B cell (primary cell): ENCODE measurements at regions of chr1 and their contacts with region 1.

Region 1: GRCh38 chr1:221741711-221742554 is at the start of gene DUSP10:
- DNase-seq: peak; percentile 100
- ATAC-seq: peak; percentile 78
- H3K4me3 ChIP-seq: peak within 1 kb of the TSS; percentile 85 to 94 (median 94)
- H3K4me3 Mint-ChIP-seq: no peak within 1 kb of the TSS
- H3K27ac ChIP-seq: peak within 1 kb of the TSS; percentile 99
- H3K27ac Mint-ChIP-seq: no peak within 1 kb of the TSS
- H3K4me1 ChIP-seq: peaks cover 28 to 42% of the 10 kb centered on the region in 2 donors
- H3K4me1 Mint-ChIP-seq: peaks cover 26% of the 10 kb centered on the region
- H3K27me3 ChIP-seq: no peaks in the 10 kb centered on the region
- H3K27me3 Mint-ChIP-seq: no peaks in the 10 kb centered on the region
- CTCF ChIP-seq: no peak
- total RNA-seq, gene DUSP10: 19.8 and 22.8 TPM in 2 replicates

Region 2: GRCh38 chr1:220879076-220879508 is 862.8 kb before region 1 on chr1 and contains the start of gene HLX:
- CTCF ChIA-PET with region 1: interaction called, 3 read pairs
- POLR2A ChIA-PET with region 1: no interaction called
- intact Hi-C with region 1: loop called (anchors 5 kb)
- DNase-seq: peak; percentile 84
- ATAC-seq: peak; percentile 83
- H3K4me3 ChIP-seq: peak within 1 kb of the TSS; percentile 62 to 84 (median 75)
- H3K4me3 Mint-ChIP-seq: peak within 1 kb of the TSS; percentile 89
- H3K27ac ChIP-seq: peak within 1 kb of the TSS; percentile 25 to 53
- H3K27ac Mint-ChIP-seq: peak within 1 kb of the TSS; percentile 94
- H3K4me1 ChIP-seq: peaks cover 40 to 55% of the 10 kb centered on the region in 2 donors
- H3K4me1 Mint-ChIP-seq: peaks cover 59% of the 10 kb centered on the region
- H3K27me3 ChIP-seq: peaks cover 0 to 53% (median 23%) of the 10 kb centered on the region in 4 experiments
- H3K27me3 Mint-ChIP-seq: peaks cover 10% of the 10 kb centered on the region
- CTCF ChIP-seq: no peak
- total RNA-seq, gene HLX: 7.7 and 9.1 TPM in 2 replicates

Region 3: GRCh38 chr1:221117548-221117951 is 624.4 kb before region 1 on chr1:
- CTCF ChIA-PET with region 1: no interaction called
- POLR2A ChIA-PET with region 1: no interaction called
- intact Hi-C with region 1: no loop called
- DNase-seq: no peak
- ATAC-seq: no peak
- H3K4me3 ChIP-seq: no peak overlapping the region
- H3K4me3 Mint-ChIP-seq: no peak overlapping the region
- H3K27ac ChIP-seq: no peak overlapping the region
- H3K27ac Mint-ChIP-seq: no peak overlapping the region
- H3K4me1 ChIP-seq: no peaks in the 10 kb centered on the region
- H3K4me1 Mint-ChIP-seq: no peaks in the 10 kb centered on the region
- H3K27me3 ChIP-seq: no peaks in the 10 kb centered on the region
- H3K27me3 Mint-ChIP-seq: peaks cover 12% of the 10 kb centered on the region
- CTCF ChIP-seq: no peak

Region 4: GRCh38 chr1:221693087-221693486 is 48.8 kb before region 1 on chr1:
- CTCF ChIA-PET with region 1: no interaction called
- POLR2A ChIA-PET with region 1: no interaction called
- intact Hi-C with region 1: no loop called
- DNase-seq: no peak
- ATAC-seq: no peak
- H3K4me3 ChIP-seq: no peak overlapping the region
- H3K4me3 Mint-ChIP-seq: no peak overlapping the region
- H3K27ac ChIP-seq: no peak overlapping the region
- H3K27ac Mint-ChIP-seq: no peak overlapping the region
- H3K4me1 ChIP-seq: no peaks in the 10 kb centered on the region
- H3K4me1 Mint-ChIP-seq: peaks cover 7% of the 10 kb centered on the region
- H3K27me3 ChIP-seq: no peaks in the 10 kb centered on the region
- H3K27me3 Mint-ChIP-seq: no peaks in the 10 kb centered on the region
- CTCF ChIP-seq: peak; percentile 21

Region 5: GRCh38 chr1:221708987-221709386 is 32.9 kb before region 1 on chr1:
- CTCF ChIA-PET with region 1: interaction called, 16 read pairs
- POLR2A ChIA-PET with region 1: interaction called, 44 read pairs
- intact Hi-C with region 1: loop called (anchors 1 kb)
- DNase-seq: peak; percentile 84
- ATAC-seq: peak; percentile 63
- H3K4me3 ChIP-seq: no peak overlapping the region
- H3K4me3 Mint-ChIP-seq: peak overlapping the region; percentile 65
- H3K27ac ChIP-seq: no peak overlapping the region
- H3K27ac Mint-ChIP-seq: peak overlapping the region; percentile 83
- H3K4me1 ChIP-seq: peaks cover 34 to 37% of the 10 kb centered on the region in 2 donors
- H3K4me1 Mint-ChIP-seq: peaks cover 57% of the 10 kb centered on the region
- H3K27me3 ChIP-seq: no peaks in the 10 kb centered on the region
- H3K27me3 Mint-ChIP-seq: no peaks in the 10 kb centered on the region
- CTCF ChIP-seq: no peak

Region 6: DNA sequence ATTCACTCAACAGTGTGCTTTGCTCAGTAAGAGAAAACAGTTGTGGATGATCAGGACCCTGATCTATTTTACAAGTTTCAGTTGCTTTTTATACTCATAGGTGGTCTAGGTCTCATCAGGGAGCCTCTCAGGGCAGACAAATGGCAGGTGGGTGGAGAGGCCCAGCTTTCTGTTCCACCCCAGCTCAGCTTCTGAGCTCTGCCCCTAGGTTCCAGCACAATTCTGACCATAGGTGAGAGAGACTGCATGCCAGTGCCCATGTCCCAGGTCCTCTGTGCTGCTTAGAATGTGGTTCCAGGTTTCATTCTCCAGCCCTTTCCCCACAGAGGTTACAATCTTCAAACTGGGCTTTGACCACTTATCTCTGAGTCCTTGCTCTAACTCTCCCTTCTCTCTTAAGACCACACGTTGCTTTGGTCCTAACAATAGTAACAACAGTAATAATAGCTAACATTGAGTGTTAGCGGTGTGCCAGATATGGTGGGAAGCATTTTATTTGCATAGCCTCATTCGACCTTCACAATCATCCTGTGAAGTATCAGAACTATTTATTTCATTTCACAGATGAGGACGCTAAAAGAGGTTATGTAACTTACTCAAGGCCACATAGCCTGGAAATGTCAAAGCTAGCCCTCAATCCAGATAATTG is 19.5 kb after region 1 on chr1:
- CTCF ChIA-PET with region 1: no interaction called
- POLR2A ChIA-PET with region 1: interaction called, 11 read pairs
- intact Hi-C with region 1: no loop called
- DNase-seq: no peak
- ATAC-seq: no peak
- H3K4me3 ChIP-seq: no peak overlapping the region
- H3K4me3 Mint-ChIP-seq: no peak overlapping the region
- H3K27ac ChIP-seq: no peak overlapping the region
- H3K27ac Mint-ChIP-seq: no peak overlapping the region
- H3K4me1 ChIP-seq: peaks cover 4 to 7% of the 10 kb centered on the region in 2 donors
- H3K4me1 Mint-ChIP-seq: peaks cover 23% of the 10 kb centered on the region
- H3K27me3 ChIP-seq: no peaks in the 10 kb centered on the region
- H3K27me3 Mint-ChIP-seq: no peaks in the 10 kb centered on the region
- CTCF ChIP-seq: no peak

Region 7: DNA sequence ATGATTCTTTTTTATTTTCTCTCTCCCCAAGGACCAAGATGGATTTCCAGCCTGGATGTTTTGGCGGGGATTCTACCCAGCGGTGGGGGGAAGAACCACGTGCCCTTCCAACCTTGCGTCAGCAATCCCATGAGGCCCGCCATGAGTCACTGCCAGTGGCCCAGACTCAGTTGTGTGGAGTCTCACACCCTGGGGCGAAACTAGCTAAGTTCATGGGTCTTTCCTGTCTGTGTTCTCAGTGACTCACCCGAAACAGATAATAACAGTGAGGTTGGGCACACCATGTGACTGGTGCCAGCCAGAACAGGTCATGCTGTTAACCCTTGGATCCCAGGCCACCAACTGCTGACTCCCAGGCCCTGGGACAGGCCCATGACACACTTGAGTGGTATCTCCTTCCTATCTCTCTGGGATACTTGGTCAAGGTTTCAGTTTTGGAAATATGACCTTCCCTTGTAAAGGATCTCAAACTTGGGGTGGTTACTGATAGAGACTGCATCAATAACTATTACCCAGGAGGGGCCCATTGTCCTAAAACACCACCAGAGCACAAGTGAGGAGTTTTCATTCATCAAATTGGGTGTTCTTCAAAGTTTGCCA is 98.0 kb after region 1 on chr1:
- CTCF ChIA-PET with region 1: interaction called, 10 read pairs
- POLR2A ChIA-PET with region 1: interaction called, 21 read pairs
- intact Hi-C with region 1: loop called (anchors 1 kb)
- DNase-seq: peak; percentile 46
- ATAC-seq: peak; percentile 79
- H3K4me3 ChIP-seq: no peak overlapping the region
- H3K4me3 Mint-ChIP-seq: peak overlapping the region; percentile 42
- H3K27ac ChIP-seq: no peak overlapping the region
- H3K27ac Mint-ChIP-seq: peak overlapping the region; percentile 75
- H3K4me1 ChIP-seq: peaks cover 30 to 34% of the 10 kb centered on the region in 2 donors
- H3K4me1 Mint-ChIP-seq: peaks cover 42% of the 10 kb centered on the region
- H3K27me3 ChIP-seq: peaks cover 0 to 6% (median 0%) of the 10 kb centered on the region in 4 experiments
- H3K27me3 Mint-ChIP-seq: no peaks in the 10 kb centered on the region
- CTCF ChIP-seq: no peak

Region 8: DNA sequence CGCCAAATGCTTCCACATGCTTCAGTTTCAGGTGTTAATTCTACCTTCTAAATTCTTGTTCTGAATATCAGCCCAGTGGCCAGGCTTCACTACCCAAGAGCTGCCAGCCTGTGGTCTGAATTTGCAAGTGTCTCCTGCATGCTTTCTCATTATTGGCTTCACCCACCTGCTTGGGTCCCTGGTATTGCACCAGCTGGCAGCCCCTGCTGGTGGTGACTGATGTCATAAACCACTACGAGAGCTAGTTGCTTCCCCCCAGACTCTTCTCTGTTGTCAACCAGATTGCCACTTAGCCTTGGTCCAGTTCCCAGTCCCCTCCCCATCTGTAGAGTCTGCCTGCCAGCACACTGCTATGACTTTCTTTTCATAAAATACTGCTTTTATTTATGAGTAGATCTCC is 197.7 kb after region 1 on chr1:
- CTCF ChIA-PET with region 1: interaction called, 5 read pairs
- POLR2A ChIA-PET with region 1: interaction called, 3 read pairs
- intact Hi-C with region 1: loop called (anchors 1 kb)
- DNase-seq: peak; percentile 85
- ATAC-seq: peak; percentile 95
- H3K4me3 ChIP-seq: no peak overlapping the region
- H3K4me3 Mint-ChIP-seq: peak overlapping the region; percentile 29
- H3K27ac ChIP-seq: peak overlapping the region in 1 of 2 donors; percentile 27
- H3K27ac Mint-ChIP-seq: peak overlapping the region; percentile 76
- H3K4me1 ChIP-seq: peaks cover 22 to 27% of the 10 kb centered on the region in 2 donors
- H3K4me1 Mint-ChIP-seq: peaks cover 38% of the 10 kb centered on the region
- H3K27me3 ChIP-seq: no peaks in the 10 kb centered on the region
- H3K27me3 Mint-ChIP-seq: no peaks in the 10 kb centered on the region
- CTCF ChIP-seq: peak; percentile 38

Region 9: DNA sequence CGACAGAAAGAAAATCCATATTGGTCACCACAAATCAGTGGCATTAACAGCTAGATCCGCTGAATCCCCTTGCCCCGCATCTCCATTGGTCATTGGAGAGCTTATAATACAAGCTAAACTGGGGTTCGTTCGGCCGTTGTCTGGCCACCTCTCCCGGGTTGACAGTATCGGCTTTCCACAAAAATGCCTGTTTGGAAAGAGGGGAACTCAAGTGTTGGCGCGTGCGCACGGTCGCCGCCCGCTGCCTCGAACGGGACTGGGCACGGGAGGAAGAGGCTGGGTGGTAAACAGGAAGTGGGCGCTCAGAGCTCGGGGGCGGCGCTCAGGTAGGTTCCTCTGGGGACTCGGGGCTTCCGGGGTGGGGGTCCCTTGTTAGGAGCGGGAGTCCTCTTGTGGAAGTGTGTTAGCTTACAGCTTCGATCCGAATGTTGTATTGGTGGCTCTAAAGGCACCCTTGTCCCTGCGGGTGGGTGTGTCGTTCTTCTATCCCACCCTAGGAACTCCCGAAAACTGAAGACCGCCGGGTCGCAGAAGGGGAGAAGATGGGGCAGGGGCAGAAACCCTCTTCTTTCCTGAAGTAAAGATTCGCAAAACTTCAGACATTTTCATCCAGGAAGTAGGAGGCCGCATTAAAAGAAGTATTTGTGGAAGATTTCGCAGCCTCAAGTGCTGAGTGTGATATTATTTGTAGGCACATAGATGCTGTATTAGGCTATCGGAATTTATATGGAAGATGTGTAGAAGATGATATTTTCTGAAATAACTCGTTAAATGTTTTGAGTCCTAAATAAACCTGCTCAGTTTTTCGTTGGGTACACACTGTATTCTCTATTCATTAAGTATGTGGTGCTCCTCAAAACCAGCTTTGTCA is 971.4 kb after region 1 on chr1:
- CTCF ChIA-PET with region 1: interaction called, 3 read pairs
- POLR2A ChIA-PET with region 1: interaction called, 3 read pairs
- intact Hi-C with region 1: loop called (anchors 5 kb)
- DNase-seq: peak; percentile 97
- ATAC-seq: peak; percentile 73
- H3K4me3 ChIP-seq: peak overlapping the region; percentile 70 to 98 (median 81)
- H3K4me3 Mint-ChIP-seq: peak overlapping the region; percentile 97
- H3K27ac ChIP-seq: peak overlapping the region; percentile 97 to 99
- H3K27ac Mint-ChIP-seq: peak overlapping the region; percentile 100
- H3K4me1 ChIP-seq: peaks cover 26 to 35% of the 10 kb centered on the region in 2 donors
- H3K4me1 Mint-ChIP-seq: peaks cover 48% of the 10 kb centered on the region
- H3K27me3 ChIP-seq: no peaks in the 10 kb centered on the region
- H3K27me3 Mint-ChIP-seq: no peaks in the 10 kb centered on the region
- CTCF ChIP-seq: peak; percentile 13